Right ventricle myocardium inferior (tissue), 1 donor: ENCODE measurements at regions of chr16 and their contacts with region 1.

Region 1: DNA sequence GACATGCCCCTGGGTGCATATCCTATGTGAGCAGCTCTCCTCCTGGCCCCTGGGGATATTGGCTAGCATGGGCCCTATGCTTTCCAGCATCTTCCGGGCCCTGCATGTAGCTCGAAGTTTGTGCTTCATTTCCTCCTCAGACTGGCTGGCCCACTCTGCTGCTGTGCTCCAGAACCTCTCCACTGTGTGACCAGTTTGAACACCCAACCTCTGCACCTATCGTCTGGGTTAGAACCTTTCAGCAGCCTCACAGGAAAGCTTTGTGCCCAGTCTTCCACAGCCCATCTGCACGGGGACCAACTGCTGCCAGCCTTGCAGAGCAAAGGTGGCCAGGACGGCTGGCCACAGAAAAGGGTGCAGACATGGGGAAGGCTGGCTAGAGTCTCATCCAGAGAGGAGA is 10.2 kb upstream of the CLEC18B start:
- DNase-seq: no peak
- ATAC-seq: no peak

Region 2: GRCh38 chr16:74216319-74216718 is 215.2 kb before region 1 on chr16:
- intact Hi-C with region 1: no loop called
- DNase-seq: no peak
- ATAC-seq: no peak

Region 3: DNA sequence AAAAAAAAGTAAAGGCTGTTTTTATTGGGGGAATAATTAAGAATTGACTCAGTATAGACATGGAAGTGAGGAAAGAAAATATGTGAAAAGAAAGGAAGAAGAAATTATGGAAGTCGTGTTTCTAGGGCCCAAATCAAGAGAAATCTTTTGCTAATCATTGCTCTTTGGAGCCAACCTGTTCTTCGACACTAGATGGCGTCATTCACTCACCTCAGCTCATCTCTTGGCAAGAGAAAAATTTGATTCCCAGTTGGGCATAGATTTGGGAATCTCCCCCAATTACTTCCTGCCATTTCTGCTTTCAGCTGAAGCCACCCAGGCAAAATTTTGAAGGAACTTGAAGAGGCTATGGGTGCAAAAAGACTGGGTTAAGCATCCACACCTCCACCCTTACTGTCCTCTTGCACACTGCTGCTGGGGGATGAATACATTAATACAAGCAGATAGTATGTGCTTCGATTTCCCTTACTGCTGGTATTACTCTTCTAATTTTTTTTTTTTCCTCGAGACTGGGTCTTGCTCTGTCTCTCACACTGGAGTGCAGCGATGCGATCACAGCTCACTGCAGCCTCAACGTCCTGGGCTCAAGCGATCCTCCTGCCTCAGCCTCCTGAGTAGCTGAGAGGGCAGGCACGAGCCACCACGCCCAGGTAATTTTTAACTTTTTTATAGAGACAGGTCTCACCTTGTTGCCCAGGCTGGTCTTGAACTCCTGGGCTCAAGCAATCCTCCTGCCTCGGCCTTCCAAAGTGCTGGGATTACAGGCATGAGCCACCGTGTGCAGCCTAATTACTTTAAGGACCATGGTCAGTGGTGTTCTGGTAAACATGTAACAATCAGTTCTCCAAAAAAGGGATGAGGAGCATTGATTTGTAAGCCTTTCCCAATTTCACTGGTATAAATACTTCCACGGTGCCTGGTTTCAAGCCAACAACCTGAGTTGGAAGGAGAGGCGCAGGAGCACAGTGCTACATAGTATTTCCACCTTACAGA is 121.4 kb before region 1 on chr16:
- intact Hi-C with region 1: loop called (anchors 5 kb)
- DNase-seq: no peak
- ATAC-seq: no peak